ENCODE measurements at regions of chr2 and their contacts with region 1.

Region 1: DNA sequence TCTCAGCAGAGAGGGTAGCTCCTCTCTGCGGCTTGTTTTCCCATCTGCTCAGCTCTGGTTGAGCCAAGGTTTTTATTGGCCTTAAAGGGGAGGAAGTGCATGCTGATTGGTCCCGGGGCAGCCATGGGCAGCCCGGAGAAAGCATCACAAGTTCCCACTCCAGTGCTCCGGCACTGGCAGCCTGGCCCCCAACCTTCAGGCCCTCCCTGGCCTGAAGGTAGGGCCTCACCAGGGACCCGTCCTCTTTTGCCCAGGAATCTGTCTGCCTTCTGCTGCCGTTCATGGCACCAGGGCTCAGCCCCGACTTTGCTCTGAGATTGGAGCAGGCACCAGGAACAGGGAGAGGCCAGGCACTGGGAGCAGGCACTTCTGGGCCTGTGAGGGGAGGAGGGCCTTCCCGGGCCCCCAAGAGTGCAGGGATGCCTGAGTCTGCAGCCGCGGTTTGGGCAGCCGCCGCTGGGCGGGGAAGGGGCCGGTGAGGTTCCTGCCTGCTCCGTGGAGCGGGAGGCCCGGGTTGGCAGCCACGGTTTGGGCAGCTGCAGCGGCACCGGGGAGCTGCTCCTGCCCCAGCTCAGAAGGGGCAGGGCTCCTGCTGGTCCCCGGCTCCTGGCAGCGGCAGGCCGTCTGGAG is 17.5 kb upstream of the ILKAP start:
- DNase-seq: peak in 9 of 10 donors; percentile 50 to 83 (median 73)
- H3K4me3 ChIP-seq: peak overlapping the region in 55 of 59 donors; percentile 1 to 60 (median 40)
- H3K27ac ChIP-seq: peak overlapping the region; percentile 66 to 100 (median 89)
- H3K27me3 ChIP-seq: no peaks in the 10 kb centered on the region
- CTCF ChIP-seq: peak in 1 of 56 donors; percentile 19

Region 2: GRCh38 chr2:238187618-238188548 is 33.1 kb before region 1 on chr2:
- intact Hi-C with region 1: loop called in 1 of 2 experiments (anchors 5 kb)
- DNase-seq: peak in 2 of 10 donors; percentile 43 to 46
- H3K4me3 ChIP-seq: peak overlapping the region in 3 of 59 donors; percentile 6 to 43 (median 8)
- H3K27ac ChIP-seq: peak overlapping the region in 58 of 59 donors; percentile 18 to 94 (median 84)
- H3K27me3 ChIP-seq: no peaks in the 10 kb centered on the region
- CTCF ChIP-seq: no peak

Region 3: DNA sequence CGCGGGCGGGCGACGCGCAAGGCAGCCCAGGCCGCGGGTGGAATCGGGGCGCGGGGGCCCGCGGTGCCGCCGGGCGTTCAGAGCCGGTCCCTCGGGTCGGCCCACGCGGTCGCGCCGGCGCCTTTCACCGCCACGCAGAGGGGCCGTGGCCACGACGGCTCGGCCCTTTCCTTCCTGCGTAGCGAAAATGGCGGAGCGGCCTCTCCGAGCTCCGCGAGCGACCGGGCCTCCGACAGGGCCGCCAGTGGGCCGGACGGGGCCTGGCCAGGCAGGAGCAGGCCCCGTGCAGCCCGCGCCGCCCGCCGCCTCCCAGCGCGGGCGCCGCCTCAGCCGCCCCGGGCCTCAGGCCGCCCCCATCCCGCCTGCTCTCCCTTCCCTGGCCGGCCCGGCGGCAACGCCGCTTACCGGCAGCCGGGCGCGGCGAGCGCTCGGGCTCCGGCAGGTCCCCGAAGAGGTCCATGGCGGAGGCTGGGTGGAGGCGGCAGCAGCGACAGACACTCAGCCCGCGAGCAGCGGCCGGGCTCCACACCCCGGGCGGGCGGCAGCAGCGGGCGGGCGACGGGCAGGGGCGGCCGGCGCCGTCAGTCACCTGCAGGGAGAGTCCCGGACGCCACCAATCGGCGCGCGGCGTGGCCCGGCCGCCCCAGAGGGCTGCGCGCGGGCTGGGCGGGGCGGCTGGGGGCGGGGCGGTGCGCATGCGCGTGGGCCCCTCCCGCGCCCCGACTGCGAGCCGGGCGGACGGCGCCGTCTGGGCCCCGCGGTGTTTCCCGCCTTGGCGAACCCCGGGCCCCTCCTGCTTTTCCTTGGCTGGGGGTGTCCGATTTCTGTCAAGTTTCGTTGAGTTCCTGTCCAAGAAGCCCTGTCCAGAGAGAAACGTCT is 17.7 kb before region 1 on chr2 and contains the start of gene ILKAP:
- intact Hi-C with region 1: loop called in 1 of 2 experiments (anchors 1 kb)
- DNase-seq: peak; percentile 70 to 94 (median 85)
- H3K4me3 ChIP-seq: peak within 1 kb of the TSS; percentile 54 to 96 (median 79)
- H3K27ac ChIP-seq: peak within 1 kb of the TSS; percentile 73 to 98 (median 93)
- H3K27me3 ChIP-seq: no peaks in the 10 kb centered on the region
- CTCF ChIP-seq: peak in 9 of 56 donors; percentile 7 to 33 (median 23)
- total RNA-seq, gene ILKAP: 44.0 to 90.8 (median 62.7) TPM

Measured in dorsolateral prefrontal cortex (tissue), 120 donors.